ENCODE measurements at regions of chr5 and their contacts with region 1.

Region 1: GRCh38 chr5:160508780-160509361 is 87.2 kb downstream of the PTTG1 start:
- DNase-seq: peak in 7 of 10 donors; percentile 43 to 76 (median 56)
- H3K4me3 ChIP-seq: peak overlapping the region in 1 of 59 donors; percentile 15
- H3K27ac ChIP-seq: peak overlapping the region in 46 of 59 donors; percentile 8 to 84 (median 53)
- H3K27me3 ChIP-seq: no peaks in the 10 kb centered on the region
- CTCF ChIP-seq: peak; percentile 74 to 95 (median 89)

Region 2: GRCh38 chr5:160439205-160439600 is 69.7 kb before region 1 on chr5:
- intact Hi-C with region 1: loop called (anchors 2 to 10 kb)
- DNase-seq: peak; percentile 80 to 96 (median 90)
- H3K4me3 ChIP-seq: peak overlapping the region; percentile 42 to 77 (median 63)
- H3K27ac ChIP-seq: peak overlapping the region in 40 of 59 donors; percentile 0 to 84 (median 50)
- H3K27me3 ChIP-seq: no peaks in the 10 kb centered on the region
- CTCF ChIP-seq: peak; percentile 76 to 98 (median 92)

Region 3: GRCh38 chr5:160539431-160539830 is 30.6 kb after region 1 on chr5:
- intact Hi-C with region 1: no loop called
- DNase-seq: no peak
- H3K4me3 ChIP-seq: no peak overlapping the region
- H3K27ac ChIP-seq: no peak overlapping the region
- H3K27me3 ChIP-seq: no peaks in the 10 kb centered on the region
- CTCF ChIP-seq: no peak

Region 4: GRCh38 chr5:160627921-160628618 is 119.2 kb after region 1 on chr5:
- intact Hi-C with region 1: loop called in 1 of 2 experiments (anchors 5 kb)
- DNase-seq: peak in 5 of 10 donors; percentile 7 to 63 (median 55)
- H3K4me3 ChIP-seq: no peak overlapping the region
- H3K27ac ChIP-seq: peak overlapping the region in 49 of 59 donors; percentile 0 to 74 (median 48)
- H3K27me3 ChIP-seq: no peaks in the 10 kb centered on the region
- CTCF ChIP-seq: no peak

Region 5: GRCh38 chr5:160787240-160787639 is 278.4 kb after region 1 on chr5:
- intact Hi-C with region 1: loop called in 1 of 2 experiments (anchors 5 kb)
- DNase-seq: no peak
- H3K4me3 ChIP-seq: no peak overlapping the region
- H3K27ac ChIP-seq: peak overlapping the region in 39 of 59 donors; percentile 4 to 83 (median 65)
- H3K27me3 ChIP-seq: no peaks in the 10 kb centered on the region
- CTCF ChIP-seq: peak in 48 of 56 donors; percentile 13 to 59 (median 40)

Measured in dorsolateral prefrontal cortex (tissue), 120 donors.